ENCODE measurements at regions of chr17 and their contacts with region 1.

Region 1: DNA sequence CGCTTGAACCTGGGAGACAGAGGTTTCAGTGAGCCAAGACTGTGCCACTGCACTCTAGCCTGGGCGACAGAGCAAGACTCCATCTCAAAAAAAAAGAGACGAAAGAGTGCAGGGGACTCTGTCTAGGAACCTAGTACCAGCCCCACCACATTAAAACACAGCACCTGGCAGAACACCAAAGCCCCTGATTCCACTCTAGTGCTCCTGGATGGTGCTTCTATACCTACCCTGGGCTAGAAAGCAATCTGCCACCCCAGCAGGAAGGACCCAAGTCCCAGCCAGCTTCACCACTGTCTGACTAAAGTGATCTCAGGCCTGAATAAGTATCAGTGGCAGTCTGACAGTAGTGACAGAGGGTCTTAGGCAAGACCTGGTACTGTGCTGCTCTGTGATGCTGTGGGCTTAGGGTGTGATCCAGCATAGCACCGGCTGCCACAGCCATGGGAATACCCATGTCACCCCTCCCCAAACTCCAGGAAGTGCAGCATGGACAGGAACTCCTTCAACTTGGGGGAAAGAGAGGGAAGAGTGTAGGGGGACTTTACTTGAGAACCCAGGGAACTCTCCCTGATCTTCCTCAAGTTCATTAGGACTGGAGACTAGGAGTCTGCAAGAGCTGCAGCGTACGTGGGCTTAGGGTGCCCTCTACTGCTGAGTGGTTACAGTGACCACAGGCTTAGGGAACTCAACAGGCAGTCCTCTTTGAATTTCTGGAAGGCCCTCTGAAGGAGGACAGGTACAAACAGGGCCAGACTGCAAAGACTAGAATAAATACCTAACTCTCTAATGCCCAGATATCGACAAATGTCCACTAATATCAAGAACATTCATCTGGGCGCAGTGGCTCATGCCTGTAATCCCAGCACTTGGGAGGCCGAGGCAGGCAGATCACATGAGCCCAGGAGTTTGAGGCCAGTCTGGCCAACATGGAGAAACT is 30.0 kb upstream of the RNF43 start:
- DNase-seq: peak; percentile 72
- CTCF ChIP-seq: peak; percentile 85

Region 2: GRCh38 chr17:58270476-58271215 is 176.7 kb before region 1 on chr17:
- in situ Hi-C with region 1: no loop called
- DNase-seq: no peak
- CTCF ChIP-seq: no peak

Region 3: GRCh38 chr17:58308173-58308984 is 138.9 kb before region 1 on chr17:
- in situ Hi-C with region 1: loop called (anchors 5 kb)
- DNase-seq: peak; percentile 36
- CTCF ChIP-seq: peak; percentile 5

Region 4: DNA sequence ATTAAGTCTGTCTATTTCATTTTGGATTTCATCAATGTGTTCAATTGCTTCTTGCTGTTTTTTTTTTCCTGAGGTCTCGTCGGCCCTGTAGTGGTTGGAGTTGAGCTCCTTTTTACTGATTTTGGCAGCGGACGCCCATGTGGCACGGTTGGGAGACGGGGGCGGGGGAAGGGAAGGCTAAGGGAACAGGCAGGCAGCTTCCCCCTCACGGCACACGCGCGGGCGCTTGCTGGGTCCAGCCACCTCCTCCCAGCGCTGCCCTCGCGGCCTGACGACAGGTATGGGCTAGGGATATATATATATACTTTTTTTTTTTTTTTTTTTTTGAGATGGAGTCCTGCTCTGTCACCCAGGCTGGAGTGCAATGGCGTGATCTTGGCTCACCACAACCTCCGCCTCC is 29.5 kb after region 1 on chr17:
- in situ Hi-C with region 1: no loop called
- DNase-seq: no peak
- CTCF ChIP-seq: no peak

Region 5: DNA sequence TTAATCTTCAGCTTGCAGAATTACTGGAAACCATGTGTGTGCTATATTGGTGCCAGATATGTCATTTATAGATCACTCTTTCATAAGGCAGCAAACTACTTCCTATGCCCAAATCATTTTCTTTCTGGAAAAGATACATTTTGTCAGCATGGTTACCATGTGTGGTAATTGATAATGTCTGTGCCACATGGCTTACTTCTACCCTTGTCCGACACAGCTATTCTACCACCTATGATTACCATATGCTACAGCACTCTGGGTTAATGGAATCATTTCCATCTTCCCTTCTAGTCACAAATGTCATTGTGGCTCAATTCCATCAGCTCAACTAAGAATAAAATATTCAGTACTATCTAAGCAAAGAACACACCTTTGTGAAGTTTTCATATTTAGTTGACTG is 300.4 kb after region 1 on chr17:
- in situ Hi-C with region 1: no loop called
- DNase-seq: no peak
- CTCF ChIP-seq: no peak

Measured in GM13976 (cell line).